Activated T-helper 1 cell treated with anti-CD3 and anti-CD28 coated beads, Interleukin-12 subunit alpha, Interleukin-12 subunit beta, Interleukin-2, Interleukin-4 antibody, amounts not matched to agents 30 ng/mL and 10 ng/mL and 1 ng/mL, durations not matched to agents 14 hours and 24 hours and 36 hours (primary cell): ENCODE measurements at regions of chr7 and their contacts with region 1.

Region 1: GRCh38 chr7:33185786-33186185 is 56.4 kb downstream of the BBS9 start:
- DNase-seq: no peak
- H3K4me3 Mint-ChIP-seq: no peak overlapping the region
- H3K27ac Mint-ChIP-seq: no peak overlapping the region
- H3K4me1 Mint-ChIP-seq: peaks cover 5% of the 10 kb centered on the region
- H3K27me3 Mint-ChIP-seq: no peaks in the 10 kb centered on the region

Region 2: GRCh38 chr7:33612442-33612841 is 426.7 kb after region 1 on chr7:
- intact Hi-C with region 1: loop called (anchors 10 kb)
- DNase-seq: no peak
- H3K4me3 Mint-ChIP-seq: no peak overlapping the region
- H3K27ac Mint-ChIP-seq: no peak overlapping the region
- H3K4me1 Mint-ChIP-seq: no peaks in the 10 kb centered on the region
- H3K27me3 Mint-ChIP-seq: no peaks in the 10 kb centered on the region

Region 3: DNA sequence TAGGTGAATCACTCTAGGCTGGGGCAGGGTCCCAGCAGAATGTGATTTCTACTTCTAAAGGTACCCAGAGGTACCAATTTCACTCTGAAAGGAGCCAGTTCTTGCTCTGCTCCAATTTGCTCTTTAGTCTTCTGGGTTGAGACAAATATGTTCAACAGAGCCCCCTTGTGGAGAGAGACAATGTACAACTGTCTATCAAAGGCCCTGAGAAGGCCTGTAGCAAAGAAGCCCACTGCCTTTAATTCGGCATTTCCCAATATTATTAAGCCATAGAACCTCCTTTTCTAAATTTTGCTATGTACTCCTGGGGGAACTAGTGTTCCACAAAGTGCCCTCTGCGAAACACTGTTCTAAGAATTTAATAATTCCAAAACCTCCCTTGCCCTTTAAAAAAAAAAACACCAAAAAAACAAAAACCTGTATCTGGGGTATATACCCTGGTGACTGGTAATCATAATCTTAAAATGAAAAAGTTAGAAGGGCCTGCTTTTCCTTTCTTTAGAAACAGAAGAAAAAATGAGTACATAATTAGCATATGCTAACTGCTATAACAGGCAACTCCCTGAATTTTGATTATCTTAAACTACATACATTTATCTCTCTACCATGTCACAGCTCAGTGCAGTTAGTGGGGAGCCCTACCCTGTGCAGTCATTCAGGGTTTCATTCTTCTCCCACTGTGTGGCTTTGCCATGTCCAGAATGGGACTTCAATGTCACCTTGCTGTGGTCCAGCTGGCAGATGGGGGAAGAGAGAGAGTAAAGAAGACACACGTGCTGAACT is 558.7 kb after region 1 on chr7:
- intact Hi-C with region 1: loop called (anchors 1 kb)
- DNase-seq: no peak
- H3K4me3 Mint-ChIP-seq: no peak overlapping the region
- H3K27ac Mint-ChIP-seq: no peak overlapping the region
- H3K4me1 Mint-ChIP-seq: no peaks in the 10 kb centered on the region
- H3K27me3 Mint-ChIP-seq: no peaks in the 10 kb centered on the region

Region 4: GRCh38 chr7:33895025-33895804 is 709.4 kb after region 1 on chr7:
- intact Hi-C with region 1: loop called (anchors 2 kb)
- DNase-seq: peak; percentile 45
- H3K4me3 Mint-ChIP-seq: no peak overlapping the region
- H3K27ac Mint-ChIP-seq: no peak overlapping the region
- H3K4me1 Mint-ChIP-seq: no peaks in the 10 kb centered on the region
- H3K27me3 Mint-ChIP-seq: peaks cover 20% of the 10 kb centered on the region